Activated CD4-positive, alpha-beta memory T cell treated with anti-CD3 and anti-CD28 coated beads, Interleukin-2, amount 10 ng/mL, durations not matched to agents 7 days and 5 days (primary cell): ENCODE measurements at regions of chr6 and their contacts with region 1.

Region 1: GRCh38 chr6:137799950-137800568 is 67.0 kb upstream of the TNFAIP3 start:
- DNase-seq: peak; percentile 62
- H3K4me3 Mint-ChIP-seq: no peak overlapping the region
- H3K27ac Mint-ChIP-seq: peak overlapping the region; percentile 13
- H3K4me1 Mint-ChIP-seq: peaks cover 45% of the 10 kb centered on the region
- H3K27me3 Mint-ChIP-seq: no peaks in the 10 kb centered on the region

Region 2: GRCh38 chr6:137944793-137945498 is 144.9 kb after region 1 on chr6:
- CTCF ChIA-PET with region 1: interaction called, 11 read pairs
- POLR2A ChIA-PET with region 1: no interaction called
- DNase-seq: no peak
- H3K4me3 Mint-ChIP-seq: no peak overlapping the region
- H3K27ac Mint-ChIP-seq: no peak overlapping the region
- H3K4me1 Mint-ChIP-seq: peaks cover 33% of the 10 kb centered on the region
- H3K27me3 Mint-ChIP-seq: no peaks in the 10 kb centered on the region

Region 3: DNA sequence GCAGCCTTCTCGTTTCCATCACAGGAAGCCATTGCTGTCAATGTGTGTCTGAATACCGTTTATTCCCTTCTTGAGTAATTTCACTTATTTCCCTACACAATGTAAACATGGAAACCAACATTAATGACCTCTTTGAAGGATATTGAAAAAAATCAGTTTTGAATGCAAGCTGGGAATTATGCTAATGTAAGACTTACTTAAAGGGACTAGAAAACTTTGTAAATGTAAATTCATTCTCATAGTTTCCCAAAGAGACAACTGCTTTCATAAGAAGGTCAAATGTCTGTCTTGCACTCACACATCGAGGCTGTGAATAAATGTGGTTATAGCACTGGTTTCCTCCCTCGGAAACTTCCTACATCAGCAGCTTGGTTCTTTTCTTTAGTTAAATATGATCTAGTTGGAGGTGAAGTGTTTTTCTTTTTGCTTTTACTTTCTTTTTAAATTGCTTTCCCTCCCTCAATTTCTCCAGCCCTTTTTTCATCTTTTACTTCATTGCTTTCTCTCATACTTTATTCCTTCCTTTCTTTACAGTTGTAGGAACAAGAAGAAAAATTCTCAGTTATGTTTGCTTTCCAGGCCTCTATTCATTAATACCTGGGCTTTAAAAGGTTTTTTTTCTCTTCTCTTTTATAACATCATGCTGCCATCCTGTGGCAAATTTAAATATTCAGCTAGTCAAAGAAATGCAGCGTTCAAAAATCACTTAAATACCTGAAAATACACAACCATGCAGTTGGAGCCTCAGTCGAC is 175.3 kb after region 1 on chr6:
- CTCF ChIA-PET with region 1: interaction called, 10 read pairs
- POLR2A ChIA-PET with region 1: interaction called, 4 read pairs
- DNase-seq: peak; percentile 35
- H3K4me3 Mint-ChIP-seq: peak overlapping the region; percentile 66
- H3K27ac Mint-ChIP-seq: peak overlapping the region; percentile 91
- H3K4me1 Mint-ChIP-seq: peaks cover 53% of the 10 kb centered on the region
- H3K27me3 Mint-ChIP-seq: no peaks in the 10 kb centered on the region